ENCODE measurements at regions of chrX and their contacts with region 1.

Region 1: DNA sequence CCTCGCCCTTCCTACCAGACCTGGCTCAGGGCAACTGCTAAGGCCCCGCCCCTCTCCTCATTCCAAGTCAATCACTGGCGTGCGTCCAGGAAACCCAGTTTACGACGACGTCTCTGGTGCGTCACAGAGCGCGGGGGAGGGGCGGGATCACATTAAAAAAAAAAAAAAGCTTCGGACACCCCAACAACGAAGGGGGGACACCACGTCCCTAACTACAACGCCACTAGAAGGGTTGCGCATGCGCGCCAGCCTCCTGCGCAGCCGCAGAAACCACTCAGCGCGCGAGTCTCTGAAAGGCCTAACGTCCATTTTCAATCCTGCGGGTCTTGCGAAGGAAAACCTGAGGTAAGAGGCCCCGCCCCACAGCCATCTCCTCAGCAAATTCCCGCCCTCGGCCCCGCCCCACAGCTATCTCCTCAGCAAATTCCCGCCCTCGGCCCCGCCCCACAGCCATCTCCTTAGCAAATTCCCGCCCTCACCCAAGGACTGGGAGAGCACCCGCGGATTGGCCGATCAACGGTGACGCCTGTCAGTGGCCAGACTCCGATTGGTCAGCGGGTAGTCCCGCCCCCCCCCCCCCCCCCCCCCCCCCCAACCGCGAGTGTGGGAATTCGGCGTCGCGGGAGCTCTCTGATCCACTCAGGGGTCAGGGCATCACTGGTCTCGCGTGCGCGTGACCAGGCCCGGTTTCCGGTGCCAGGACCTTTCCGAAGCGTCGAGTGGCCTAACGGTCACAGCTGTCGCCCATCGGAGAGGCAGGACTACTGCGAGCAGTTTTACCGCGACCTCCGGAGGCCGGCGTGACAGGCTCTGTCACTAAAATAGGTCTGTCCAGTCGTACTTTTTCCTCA is at the start of gene SCML1:
- DNase-seq: peak; percentile 95
- ATAC-seq: peak; percentile 79
- H3K4me3 Mint-ChIP-seq: peak within 1 kb of the TSS; percentile 81
- H3K27ac Mint-ChIP-seq: peak within 1 kb of the TSS; percentile 95
- H3K4me1 Mint-ChIP-seq: peaks cover 25% of the 10 kb centered on the region
- H3K27me3 Mint-ChIP-seq: peaks cover 5% of the 10 kb centered on the region
- total RNA-seq, gene SCML1: 7.3 TPM

Region 2: GRCh38 chrX:16719334-16720084 is 1017.6 kb before region 1 on chrX and contains the start of gene SYAP1:
- CTCF ChIA-PET with region 1: no interaction called
- POLR2A ChIA-PET with region 1: no interaction called
- intact Hi-C with region 1: loop called in 1 of 2 experiments (anchors 5 kb)
- DNase-seq: peak; percentile 94
- ATAC-seq: peak; percentile 96
- H3K4me3 Mint-ChIP-seq: peak within 1 kb of the TSS; percentile 74
- H3K27ac Mint-ChIP-seq: peak within 1 kb of the TSS; percentile 88
- H3K4me1 Mint-ChIP-seq: peaks cover 22% of the 10 kb centered on the region
- H3K27me3 Mint-ChIP-seq: no peaks in the 10 kb centered on the region
- total RNA-seq, gene SYAP1: 22.8 to 31.4 TPM

Region 3: GRCh38 chrX:17535229-17535628 is 201.9 kb before region 1 on chrX:
- CTCF ChIA-PET with region 1: no interaction called
- POLR2A ChIA-PET with region 1: no interaction called
- intact Hi-C with region 1: loop called (anchors 5 kb)
- DNase-seq: peak; percentile 67
- ATAC-seq: peak; percentile 66
- H3K4me3 Mint-ChIP-seq: no peak overlapping the region
- H3K27ac Mint-ChIP-seq: no peak overlapping the region
- H3K4me1 Mint-ChIP-seq: peaks cover 15% of the 10 kb centered on the region
- H3K27me3 Mint-ChIP-seq: peaks cover 3% of the 10 kb centered on the region

Region 4: DNA sequence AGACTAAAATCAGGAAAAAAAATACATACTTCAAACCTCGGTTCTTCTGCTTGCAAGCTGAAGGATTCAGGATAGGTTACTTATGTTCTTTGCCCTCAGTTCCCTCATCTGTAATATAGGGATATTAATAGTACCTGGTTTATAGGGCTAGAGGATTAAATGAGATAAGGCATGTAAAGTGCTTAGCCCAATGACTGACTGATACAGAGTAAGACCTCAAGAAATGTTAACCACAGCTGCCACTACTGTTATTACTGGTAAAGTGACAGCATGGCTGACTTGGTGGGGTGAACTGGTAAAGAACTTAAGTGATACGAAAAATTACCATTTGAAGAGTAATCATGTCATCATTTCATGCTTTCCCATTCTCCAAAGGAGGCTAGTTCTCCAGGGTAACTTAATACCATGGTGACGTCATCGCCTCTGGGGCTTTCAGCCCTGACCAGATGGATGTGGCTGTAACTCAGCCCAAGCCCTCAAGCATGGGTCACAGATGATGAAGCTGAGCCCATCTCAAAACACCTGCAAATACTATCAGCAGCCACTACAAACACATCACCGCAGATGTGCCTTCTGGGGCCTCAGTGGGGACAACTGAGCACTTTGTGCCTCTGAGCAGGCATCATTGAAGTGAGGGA is 44.3 kb before region 1 on chrX:
- CTCF ChIA-PET with region 1: no interaction called
- POLR2A ChIA-PET with region 1: no interaction called
- intact Hi-C with region 1: no loop called
- DNase-seq: no peak
- ATAC-seq: peak; percentile 64
- H3K4me3 Mint-ChIP-seq: no peak overlapping the region
- H3K27ac Mint-ChIP-seq: no peak overlapping the region
- H3K4me1 Mint-ChIP-seq: peaks cover 4% of the 10 kb centered on the region
- H3K27me3 Mint-ChIP-seq: peaks cover 1% of the 10 kb centered on the region

Region 5: GRCh38 chrX:18354369-18355223 is 617.5 kb after region 1 on chrX and contains the start of gene SCML2:
- CTCF ChIA-PET with region 1: no interaction called
- POLR2A ChIA-PET with region 1: no interaction called
- intact Hi-C with region 1: loop called in 1 of 2 experiments (anchors 5 kb)
- DNase-seq: peak; percentile 62
- ATAC-seq: peak; percentile 69
- H3K4me3 Mint-ChIP-seq: peak within 1 kb of the TSS; percentile 68
- H3K27ac Mint-ChIP-seq: no peak within 1 kb of the TSS
- H3K4me1 Mint-ChIP-seq: peaks cover 4% of the 10 kb centered on the region
- H3K27me3 Mint-ChIP-seq: peaks cover 2% of the 10 kb centered on the region
- total RNA-seq, gene SCML2: 2.9 to 3.1 TPM

Region 6: DNA sequence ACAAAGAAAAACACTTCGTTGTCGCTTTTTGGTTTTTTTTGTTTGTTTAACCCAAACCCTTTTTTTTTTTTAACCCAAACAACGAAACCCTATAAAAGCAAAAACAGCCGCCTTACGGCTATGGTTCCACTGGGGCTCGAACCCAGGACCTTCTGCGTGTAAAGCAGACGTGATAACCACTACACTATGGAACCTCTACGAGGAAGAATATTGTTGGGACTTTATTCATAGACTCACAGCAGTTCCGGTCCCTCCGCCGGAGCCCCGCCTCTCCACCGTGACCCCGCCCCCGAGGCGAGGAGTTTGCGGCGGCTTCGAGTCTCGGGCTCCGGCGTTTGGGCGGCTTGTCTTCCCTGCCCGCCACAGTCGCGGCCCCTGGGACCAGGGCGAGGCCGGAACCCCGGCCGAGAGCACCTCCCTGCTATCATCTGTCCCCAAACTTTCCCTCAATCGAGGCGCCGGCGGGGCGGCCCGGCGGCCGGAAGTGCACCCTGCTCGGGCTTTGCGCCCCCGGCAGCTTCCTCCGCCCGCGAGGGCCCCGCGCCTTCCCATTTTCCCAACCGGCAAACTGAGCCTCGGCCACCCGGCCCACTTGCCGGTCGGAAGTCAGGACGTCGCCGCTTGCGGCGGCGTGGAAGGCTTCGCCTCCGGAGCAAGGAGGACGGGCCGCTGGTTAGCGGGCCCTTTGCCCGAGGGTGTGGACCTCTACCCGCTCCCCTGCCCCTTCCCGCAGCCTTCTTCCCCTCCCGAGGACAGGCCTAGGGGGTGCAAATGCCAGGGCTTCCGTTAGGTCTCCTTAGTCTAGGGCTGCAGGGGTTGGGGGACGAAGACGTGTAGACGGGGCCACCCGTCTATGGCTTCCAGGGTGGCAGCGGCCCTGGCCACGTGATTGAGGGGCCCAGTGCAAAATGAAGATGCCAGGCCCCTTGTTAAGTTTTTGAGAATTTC is 938.0 kb after region 1 on chrX:
- CTCF ChIA-PET with region 1: no interaction called
- POLR2A ChIA-PET with region 1: no interaction called
- intact Hi-C with region 1: loop called in 1 of 2 experiments (anchors 10 kb)
- DNase-seq: peak; percentile 82
- ATAC-seq: peak; percentile 81
- H3K4me3 Mint-ChIP-seq: peak overlapping the region; percentile 63
- H3K27ac Mint-ChIP-seq: peak overlapping the region; percentile 80
- H3K4me1 Mint-ChIP-seq: peaks cover 6% of the 10 kb centered on the region
- H3K27me3 Mint-ChIP-seq: no peaks in the 10 kb centered on the region

Region 7: DNA sequence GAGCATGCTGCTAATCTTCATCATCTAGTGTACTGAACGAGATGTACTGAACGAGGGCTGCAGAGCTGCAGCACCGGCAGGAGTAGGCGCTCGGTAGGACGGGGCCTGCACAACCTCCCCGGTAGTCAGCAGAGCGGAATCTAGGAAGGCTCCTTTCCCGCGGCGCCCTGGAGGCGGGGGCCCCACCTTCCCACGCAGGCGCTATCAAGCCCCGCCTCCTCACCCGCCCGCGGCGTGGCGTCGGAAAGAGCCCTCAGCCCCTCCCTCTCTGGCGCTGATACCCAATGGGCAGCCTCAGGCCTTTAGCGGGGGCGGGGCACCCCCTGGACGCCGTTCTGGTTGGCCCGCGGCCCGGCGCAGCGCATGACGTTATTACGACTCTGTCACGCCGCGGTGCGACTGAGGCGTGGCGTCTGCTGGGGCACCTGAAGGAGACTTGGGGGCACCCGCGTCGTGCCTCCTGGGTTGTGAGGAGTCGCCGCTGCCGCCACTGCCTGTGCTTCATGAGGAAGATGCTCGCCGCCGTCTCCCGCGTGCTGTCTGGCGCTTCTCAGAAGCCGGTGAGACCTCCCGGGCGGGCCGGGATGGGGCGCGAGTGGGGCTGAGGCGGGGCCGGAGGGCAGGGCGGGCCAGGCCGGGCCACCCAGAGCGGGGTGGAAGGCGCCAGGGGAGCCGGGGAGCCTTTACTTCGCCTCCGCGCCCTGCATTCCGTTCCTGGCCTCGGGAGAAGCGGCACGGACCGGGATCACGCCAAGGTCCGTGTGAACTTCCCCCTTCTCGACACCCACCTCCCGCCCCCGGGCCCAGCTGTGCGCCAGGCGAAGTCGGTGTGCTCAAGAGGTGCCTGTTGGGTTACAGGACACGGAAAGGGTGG is 1606.7 kb after region 1 on chrX and contains the start of gene PDHA1:
- CTCF ChIA-PET with region 1: no interaction called
- POLR2A ChIA-PET with region 1: no interaction called
- intact Hi-C with region 1: loop called (anchors 2 to 5 kb)
- DNase-seq: peak; percentile 95
- ATAC-seq: peak; percentile 99
- H3K4me3 Mint-ChIP-seq: peak within 1 kb of the TSS; percentile 79
- H3K27ac Mint-ChIP-seq: peak within 1 kb of the TSS; percentile 88
- H3K4me1 Mint-ChIP-seq: peaks cover 27% of the 10 kb centered on the region
- H3K27me3 Mint-ChIP-seq: no peaks in the 10 kb centered on the region
- total RNA-seq, gene PDHA1: 204 to 217 TPM

Measured in activated CD4-positive, alpha-beta T cell treated with anti-CD3 and anti-CD28 coated beads for 36 hours (primary cell).